GM18951 (cell line): ENCODE measurements at regions of chr20 and their contacts with region 1.

Region 1: GRCh38 chr20:50551288-50551687 is 41.1 kb downstream of the PTPN1 start:
- POLR2A ChIP-seq: no peak

Region 2: GRCh38 chr20:50509935-50510705 is 41.2 kb before region 1 on chr20 and contains the start of gene PTPN1:
- in situ Hi-C with region 1: loop called (anchors 5 kb)
- POLR2A ChIP-seq: peak; percentile 99

Region 3: DNA sequence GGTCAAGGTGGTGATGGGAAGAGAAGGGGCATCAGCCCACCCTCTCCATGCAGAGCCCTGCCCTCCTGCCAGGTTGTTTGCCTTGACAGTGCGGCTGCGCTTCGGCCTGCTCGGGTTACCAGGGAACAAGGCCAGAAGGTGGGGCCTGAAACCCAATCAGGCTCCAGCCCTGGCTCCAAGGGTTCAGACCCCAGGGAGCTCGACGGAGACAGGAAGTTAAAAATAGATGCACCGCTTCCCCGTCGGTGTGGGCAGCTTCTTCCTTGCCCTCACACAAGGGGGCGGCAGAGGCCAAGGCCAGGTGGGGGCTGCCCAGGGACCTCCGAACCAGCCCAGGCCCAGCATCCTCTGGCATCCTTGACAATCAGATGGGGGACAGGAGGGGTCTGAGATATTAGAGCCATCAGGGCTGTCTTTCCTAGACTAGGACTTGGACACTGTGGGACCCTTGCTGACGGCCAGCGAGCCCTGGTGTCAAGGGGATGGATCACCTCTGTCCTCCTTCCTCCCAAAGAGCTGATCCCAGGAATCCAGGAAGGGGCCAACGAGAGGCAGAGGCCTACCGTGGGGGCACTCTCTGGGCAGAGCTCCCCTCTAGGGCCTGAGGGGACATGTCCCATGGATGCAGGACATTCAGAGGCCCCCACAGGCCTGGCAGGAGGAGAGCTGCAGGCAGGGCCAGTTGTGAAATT is 74.8 kb after region 1 on chr20:
- in situ Hi-C with region 1: no loop called
- POLR2A ChIP-seq: no peak

Region 4: DNA sequence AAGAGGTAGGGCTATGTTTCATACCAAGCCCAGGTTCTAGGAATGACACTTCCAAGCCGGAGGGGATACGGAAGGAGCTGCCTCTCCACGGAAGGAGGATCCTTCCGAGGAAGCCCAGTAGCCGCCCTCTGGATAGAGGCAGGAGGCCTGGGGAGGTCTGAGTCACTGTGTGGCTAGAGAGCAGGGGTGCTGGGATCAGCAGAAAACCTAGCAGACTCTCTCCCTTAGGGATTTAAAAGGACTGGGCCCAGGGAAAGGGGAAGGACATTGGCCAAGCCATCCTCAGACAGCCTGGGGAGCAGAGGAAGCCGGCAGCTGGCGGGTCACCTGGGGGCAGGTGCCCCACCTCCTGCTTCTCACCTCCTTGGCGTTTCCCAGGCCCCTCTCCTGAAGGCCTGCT is 1027.8 kb after region 1 on chr20:
- in situ Hi-C with region 1: no loop called
- POLR2A ChIP-seq: no peak